Activated B cell treated with CpG ODN at 0.5 μM for 24 hours (primary cell): ENCODE measurements at regions of chr20 and their contacts with region 1.

Region 1: DNA sequence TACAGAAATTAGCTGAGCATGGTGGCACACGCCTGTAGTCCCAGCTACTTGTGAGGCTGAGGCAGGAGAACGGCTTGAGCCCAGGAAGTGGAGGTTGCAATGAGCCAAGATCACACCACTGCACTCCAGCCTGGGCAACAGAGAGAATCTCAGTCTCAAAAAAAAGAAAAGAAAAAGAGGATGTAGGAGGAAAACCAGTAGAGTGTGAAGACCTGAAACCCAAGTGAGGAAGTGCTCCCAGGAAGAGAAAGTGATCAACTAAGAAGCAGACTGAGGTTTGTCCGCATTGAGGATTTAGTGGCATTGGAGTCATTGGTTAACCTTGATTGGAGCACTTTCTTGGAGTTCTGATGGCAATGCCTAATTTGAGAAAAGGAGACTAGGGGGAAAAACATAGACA is 20.6 kb upstream of the TASP1 start:
- DNase-seq: peak; percentile 21
- ATAC-seq: peak; percentile 97
- H3K4me3 Mint-ChIP-seq: peak overlapping the region; percentile 8
- H3K27ac Mint-ChIP-seq: peak overlapping the region; percentile 14
- H3K4me1 Mint-ChIP-seq: peaks cover 22% of the 10 kb centered on the region
- H3K27me3 Mint-ChIP-seq: no peaks in the 10 kb centered on the region
- CTCF ChIP-seq: no peak

Region 2: DNA sequence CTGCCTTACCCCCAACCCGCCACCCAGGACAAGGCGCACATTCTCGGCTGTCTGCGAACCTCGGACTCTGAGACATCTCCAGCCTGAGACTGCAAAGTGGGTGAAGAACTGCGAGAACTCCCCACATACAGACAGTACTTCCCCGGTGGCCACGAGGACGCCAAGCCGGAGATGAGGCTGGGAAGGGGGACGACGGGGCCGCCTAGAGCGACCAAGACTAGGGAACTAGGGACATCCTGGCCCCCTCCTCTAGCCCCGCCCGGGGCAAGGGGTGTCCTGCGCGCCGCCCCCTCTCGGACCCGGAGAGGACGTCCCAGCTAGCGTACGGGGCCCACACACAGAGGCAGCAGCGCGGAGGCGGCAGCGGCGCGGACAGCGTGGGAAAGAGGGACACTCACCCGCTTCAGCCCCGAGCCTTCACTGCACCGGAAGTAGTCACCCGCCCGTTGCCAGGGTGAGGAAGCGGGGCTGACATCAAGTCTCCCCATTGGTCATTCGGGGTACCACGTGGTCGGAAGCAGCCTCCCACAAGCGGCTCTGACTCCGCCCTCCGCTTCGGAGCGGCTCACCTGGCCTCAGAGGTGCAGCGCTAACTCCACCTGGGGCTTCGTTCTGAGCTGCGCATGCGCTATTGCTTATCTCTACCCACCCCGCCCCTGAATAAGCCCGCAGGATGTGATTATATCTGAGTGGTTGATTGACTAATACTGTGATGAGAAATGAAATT is 20.6 kb before region 1 on chr20 and contains the start of gene TASP1:
- CTCF ChIA-PET with region 1: no interaction called
- POLR2A ChIA-PET with region 1: no interaction called
- intact Hi-C with region 1: loop called (anchors 1 kb)
- DNase-seq: peak; percentile 87
- ATAC-seq: peak; percentile 97
- H3K4me3 Mint-ChIP-seq: peak within 1 kb of the TSS; percentile 90
- H3K27ac Mint-ChIP-seq: peak within 1 kb of the TSS; percentile 87
- H3K4me1 Mint-ChIP-seq: peaks cover 14% of the 10 kb centered on the region
- H3K27me3 Mint-ChIP-seq: peaks cover 18% of the 10 kb centered on the region
- CTCF ChIP-seq: no peak
- total RNA-seq, gene TASP1: 17.6 and 20.6 TPM in 2 replicates

Region 3: DNA sequence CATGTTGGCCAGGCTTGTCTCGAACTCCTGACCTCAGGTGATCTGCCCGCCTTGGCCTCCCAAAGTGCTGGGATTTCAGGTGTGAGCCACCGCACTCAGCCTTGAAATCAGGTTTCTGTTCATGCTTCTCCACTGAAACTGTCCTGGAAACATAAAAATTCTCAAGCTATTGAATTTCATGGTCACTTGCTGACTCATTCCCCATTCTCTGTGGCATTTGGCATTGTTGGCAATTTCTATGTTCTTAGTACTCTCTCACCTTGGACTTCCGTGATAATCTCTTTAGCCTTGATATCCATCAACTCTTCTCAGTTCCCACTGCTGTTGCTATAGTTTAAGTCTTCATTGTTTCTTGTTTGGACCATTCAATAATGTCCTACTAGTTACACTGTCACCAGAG is 324.9 kb after region 1 on chr20:
- CTCF ChIA-PET with region 1: no interaction called
- POLR2A ChIA-PET with region 1: no interaction called
- intact Hi-C with region 1: no loop called
- DNase-seq: no peak
- ATAC-seq: no peak
- H3K4me3 Mint-ChIP-seq: no peak overlapping the region
- H3K27ac Mint-ChIP-seq: no peak overlapping the region
- H3K4me1 Mint-ChIP-seq: no peaks in the 10 kb centered on the region
- H3K27me3 Mint-ChIP-seq: no peaks in the 10 kb centered on the region
- CTCF ChIP-seq: no peak